ENCODE measurements at regions of chr3 and their contacts with region 1.

Region 1: DNA sequence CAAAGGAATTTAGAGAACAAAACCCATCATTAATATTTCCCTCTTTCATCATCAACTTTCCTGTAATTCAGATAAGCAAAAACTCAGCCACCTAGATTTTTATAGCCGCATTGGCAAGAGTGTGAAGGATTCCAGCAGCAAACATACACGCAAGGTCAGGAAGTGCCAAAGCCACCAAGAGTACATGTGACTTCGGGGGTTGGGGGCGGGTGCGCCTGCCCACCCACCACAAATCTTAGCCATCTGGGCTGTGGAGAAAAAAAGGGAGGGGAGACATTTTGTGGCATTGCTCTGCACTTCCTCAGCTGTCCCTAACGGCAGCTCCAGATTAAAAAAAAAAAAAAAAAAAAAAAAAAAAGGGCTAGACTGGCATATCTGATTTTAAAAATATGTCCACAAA is 148.4 kb downstream of the TNIK start:
- DNase-seq: peak in 5 of 35 experiments; percentile 4 to 24 (median 6)
- ATAC-seq: peak in 2 of 4 experiments; percentile 28 to 37
- H3K4me3 ChIP-seq: peak overlapping the region in 1 of 2 donors; percentile 21
- H3K4me3 Mint-ChIP-seq: peak overlapping the region in 2 of 3 donors; percentile 22 to 48
- H3K27ac ChIP-seq: no peak overlapping the region
- H3K27ac Mint-ChIP-seq: peak overlapping the region; percentile 66 to 68
- H3K4me1 ChIP-seq: peaks cover 3 to 20% of the 10 kb centered on the region in 2 experiments
- H3K4me1 Mint-ChIP-seq: peaks cover 83 to 91% (median 84%) of the 10 kb centered on the region in 3 donors
- H3K27me3 ChIP-seq: no peaks in the 10 kb centered on the region
- H3K27me3 Mint-ChIP-seq: no peaks in the 10 kb centered on the region

Region 2: DNA sequence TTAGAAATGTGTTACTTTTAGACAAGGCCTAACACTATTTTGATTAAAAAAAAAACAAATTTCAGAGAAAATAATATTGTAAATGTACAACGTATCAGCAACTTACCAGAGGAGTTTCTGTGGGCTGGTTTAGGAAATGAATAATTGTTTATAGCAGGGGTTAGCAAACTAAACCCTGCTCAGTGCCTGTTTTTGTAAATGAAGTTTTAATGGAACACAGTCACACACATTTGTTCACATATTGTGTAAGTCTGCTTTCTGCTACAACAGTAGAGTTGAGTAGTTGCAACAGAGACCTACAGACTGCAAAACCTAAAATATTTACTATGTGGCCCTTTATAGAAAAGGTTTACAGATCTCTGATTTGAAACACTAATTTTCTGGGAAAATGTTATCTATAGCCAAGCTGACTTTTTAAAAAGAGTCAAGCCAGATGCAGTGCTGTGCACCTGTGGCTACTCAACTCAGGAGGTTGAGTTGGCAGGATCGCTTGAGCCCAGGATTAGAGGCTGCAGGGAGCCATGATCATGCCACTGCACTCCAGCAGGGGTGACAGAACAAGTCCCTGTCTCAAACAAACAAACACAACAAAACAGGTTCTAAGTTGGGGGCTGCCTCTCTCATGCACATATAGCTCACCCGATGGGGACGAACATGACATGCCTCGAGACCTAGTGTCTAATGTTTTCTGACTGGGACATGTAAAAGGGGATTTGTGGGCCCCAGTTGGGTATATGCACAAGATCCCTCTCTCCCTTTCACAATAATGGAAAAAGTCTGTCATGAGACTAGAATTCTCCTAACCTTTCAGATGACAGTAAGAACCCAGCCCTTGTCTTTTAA is 34.1 kb before region 1 on chr3:
- CTCF ChIA-PET with region 1: no interaction called
- POLR2A ChIA-PET with region 1: no interaction called
- DNase-seq: no peak
- ATAC-seq: no peak
- H3K4me3 ChIP-seq: no peak overlapping the region
- H3K4me3 Mint-ChIP-seq: no peak overlapping the region
- H3K27ac ChIP-seq: no peak overlapping the region
- H3K27ac Mint-ChIP-seq: peak overlapping the region in 1 of 2 donors; percentile 39
- H3K4me1 ChIP-seq: peaks cover 8 to 15% of the 10 kb centered on the region in 2 experiments
- H3K4me1 Mint-ChIP-seq: peaks cover 74 to 79% (median 74%) of the 10 kb centered on the region in 3 donors
- H3K27me3 ChIP-seq: no peaks in the 10 kb centered on the region
- H3K27me3 Mint-ChIP-seq: no peaks in the 10 kb centered on the region

Region 3: GRCh38 chr3:171788546-171789351 is 477.0 kb after region 1 on chr3:
- CTCF ChIA-PET with region 1: interaction called in 1 of 2 experiments, 11 read pairs
- POLR2A ChIA-PET with region 1: no interaction called
- DNase-seq: no peak
- ATAC-seq: no peak
- H3K4me3 ChIP-seq: no peak overlapping the region
- H3K4me3 Mint-ChIP-seq: no peak overlapping the region
- H3K27ac ChIP-seq: no peak overlapping the region
- H3K27ac Mint-ChIP-seq: no peak overlapping the region
- H3K4me1 ChIP-seq: no peaks in the 10 kb centered on the region
- H3K4me1 Mint-ChIP-seq: no peaks in the 10 kb centered on the region
- H3K27me3 ChIP-seq: no peaks in the 10 kb centered on the region
- H3K27me3 Mint-ChIP-seq: peaks cover 0 to 4% of the 10 kb centered on the region in 2 donors

Measured in T-cell (primary cell).